BJ (cell line): ENCODE measurements at regions of chr17 and their contacts with region 1.

Region 1: GRCh38 chr17:76397687-76398487 is 13.5 kb downstream of the SPHK1 start:
- DNase-seq: no peak
- H3K4me3 ChIP-seq: no peak overlapping the region
- H3K27me3 ChIP-seq: no peaks in the 10 kb centered on the region
- CTCF ChIP-seq: peak; percentile 96

Region 2: GRCh38 chr17:75601057-75602051 is 796.5 kb before region 1 on chr17:
- CTCF ChIA-PET with region 1: no interaction called
- POLR2A ChIA-PET with region 1: no interaction called
- DNase-seq: no peak
- H3K4me3 ChIP-seq: no peak overlapping the region
- H3K27me3 ChIP-seq: no peaks in the 10 kb centered on the region
- CTCF ChIP-seq: peak; percentile 70

Region 3: GRCh38 chr17:76166168-76166567 is 231.7 kb before region 1 on chr17:
- CTCF ChIA-PET with region 1: no interaction called
- POLR2A ChIA-PET with region 1: no interaction called
- DNase-seq: no peak
- H3K4me3 ChIP-seq: no peak overlapping the region
- H3K27me3 ChIP-seq: peaks cover 4% of the 10 kb centered on the region
- CTCF ChIP-seq: 0 out of 2 replicates have a peak, but pooled peaks have one; percentile 11

Region 4: DNA sequence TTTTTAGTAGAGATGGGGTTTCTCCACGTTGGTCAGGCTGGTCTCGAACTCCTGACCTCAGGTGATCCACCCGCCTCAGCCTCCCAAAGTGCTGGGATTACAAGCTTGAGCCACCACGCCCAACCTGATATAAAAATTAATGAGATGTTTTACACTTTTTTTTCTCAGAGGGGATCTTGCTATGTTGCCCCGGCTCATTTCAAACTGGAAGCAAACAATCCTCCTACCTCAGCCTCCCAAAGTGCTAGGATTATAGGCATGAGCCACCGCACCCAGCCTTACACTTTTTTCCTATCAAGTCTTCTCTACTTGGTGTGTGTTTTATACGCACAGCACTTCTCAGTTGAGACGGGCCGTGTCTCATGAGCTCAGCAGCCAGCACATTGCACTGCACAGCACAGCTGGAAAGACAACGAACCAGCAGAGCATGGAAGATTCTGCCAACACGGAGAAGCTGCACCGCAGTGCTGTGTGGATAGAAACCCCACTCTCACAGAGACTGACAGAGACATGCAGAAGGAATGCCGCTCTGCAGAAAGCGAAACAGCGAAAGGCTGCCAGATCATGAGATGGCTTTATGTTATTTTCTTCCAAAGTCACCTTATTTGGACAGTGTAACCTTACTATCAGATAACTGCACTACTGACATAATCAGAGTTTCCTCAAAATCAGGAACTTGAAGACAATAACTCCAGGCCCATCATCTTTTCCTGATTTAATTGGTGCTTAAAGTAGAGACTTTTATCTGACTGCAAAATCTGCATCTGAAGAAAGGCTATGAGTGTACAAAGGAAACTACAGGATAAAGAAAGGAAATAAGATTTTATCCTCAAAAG is 83.3 kb before region 1 on chr17:
- CTCF ChIA-PET with region 1: interaction called, 24 read pairs
- POLR2A ChIA-PET with region 1: no interaction called
- DNase-seq: no peak
- H3K4me3 ChIP-seq: no peak overlapping the region
- H3K27me3 ChIP-seq: no peaks in the 10 kb centered on the region
- CTCF ChIP-seq: no peak

Region 5: DNA sequence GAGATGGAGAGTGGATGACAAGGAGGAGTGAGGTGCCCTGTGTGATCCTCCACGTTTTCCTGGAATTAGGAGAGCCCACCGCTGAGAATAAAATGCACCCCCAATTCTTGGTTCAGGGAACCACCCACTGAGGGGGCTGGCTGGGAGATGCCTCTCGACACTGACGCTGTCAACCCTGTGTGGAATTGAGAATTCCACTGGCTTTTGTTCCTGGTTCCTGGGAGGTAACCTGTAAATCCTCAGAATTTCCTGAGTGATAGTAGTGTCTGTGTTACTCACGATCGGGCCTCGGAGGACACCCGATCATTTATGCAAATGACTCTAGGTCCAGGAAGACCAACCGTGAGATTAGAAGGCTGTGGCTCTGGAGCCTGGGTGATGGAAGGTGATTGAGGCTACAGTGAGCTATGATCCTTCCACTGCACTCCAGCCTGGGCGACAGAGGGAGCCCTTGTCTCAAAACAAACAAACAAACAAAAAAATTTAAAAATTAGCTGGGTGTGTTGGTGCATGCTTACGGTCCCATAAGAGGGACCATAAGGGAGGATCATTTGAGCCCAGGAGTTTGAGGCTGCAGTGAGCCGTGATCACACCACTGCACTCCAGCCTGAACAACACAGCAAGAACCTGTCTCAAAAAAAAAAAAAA is 32.5 kb before region 1 on chr17:
- CTCF ChIA-PET with region 1: interaction called, 32 read pairs
- POLR2A ChIA-PET with region 1: no interaction called
- DNase-seq: no peak
- H3K4me3 ChIP-seq: no peak overlapping the region
- H3K27me3 ChIP-seq: no peaks in the 10 kb centered on the region
- CTCF ChIP-seq: peak; percentile 47

Region 6: DNA sequence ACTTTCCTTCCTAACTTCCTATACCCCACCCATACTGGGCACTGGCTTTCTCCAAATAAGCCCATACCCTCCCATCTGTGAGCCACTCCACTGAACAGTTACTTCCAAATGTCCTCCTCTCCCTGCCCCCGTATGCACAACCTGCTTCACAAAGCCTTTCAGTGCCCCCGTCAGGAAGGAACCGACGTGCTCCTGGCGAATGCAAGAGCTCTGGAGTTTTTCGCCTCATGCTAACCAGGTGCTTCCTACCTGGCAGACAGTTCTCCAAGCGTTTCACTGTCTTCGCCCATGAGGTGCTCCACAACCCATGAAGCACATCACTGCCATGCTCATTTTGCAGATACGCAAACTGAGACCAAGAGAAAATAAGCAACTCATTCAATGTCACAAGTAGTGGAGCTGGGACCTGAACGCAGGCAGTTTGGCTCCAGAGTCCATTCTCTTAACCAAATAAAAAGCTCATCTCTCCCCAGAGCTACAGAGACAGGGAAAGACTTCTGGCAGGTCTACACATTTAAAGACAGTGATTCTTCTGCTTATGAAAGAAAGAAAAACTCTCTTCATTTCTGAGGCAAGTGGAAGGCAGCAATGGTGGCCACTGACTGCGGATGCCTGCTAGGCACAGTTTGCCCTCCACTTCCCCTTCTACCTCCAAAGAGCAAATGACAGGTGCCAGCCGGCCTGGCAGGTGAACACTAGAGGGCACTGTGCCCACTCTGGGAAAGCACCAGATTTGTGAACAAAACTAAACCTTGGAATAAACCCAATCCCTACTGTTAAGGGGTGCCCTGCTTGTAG is 10.4 kb after region 1 on chr17:
- CTCF ChIA-PET with region 1: interaction called, 94 read pairs
- POLR2A ChIA-PET with region 1: no interaction called
- DNase-seq: no peak
- H3K4me3 ChIP-seq: no peak overlapping the region
- H3K27me3 ChIP-seq: no peaks in the 10 kb centered on the region
- CTCF ChIP-seq: peak; percentile 91

Region 7: GRCh38 chr17:76452660-76453430 is 55.0 kb after region 1 on chr17 and contains the start of gene UBE2O:
- CTCF ChIA-PET with region 1: interaction called, 17 read pairs
- POLR2A ChIA-PET with region 1: no interaction called
- DNase-seq: no peak
- H3K4me3 ChIP-seq: peak within 1 kb of the TSS; percentile 83
- H3K27me3 ChIP-seq: peaks cover 2% of the 10 kb centered on the region; the same call in 1 of the 2 replicates
- CTCF ChIP-seq: peak; percentile 59
- polyA plus RNA-seq, gene UBE2O: 7.0 and 11.1 TPM in 2 replicates

Region 8: GRCh38 chr17:76517638-76518038 is 119.8 kb after region 1 on chr17:
- CTCF ChIA-PET with region 1: no interaction called
- POLR2A ChIA-PET with region 1: no interaction called
- DNase-seq: no peak
- H3K4me3 ChIP-seq: no peak overlapping the region
- H3K27me3 ChIP-seq: no peaks in the 10 kb centered on the region
- CTCF ChIP-seq: no peak